HCT116 (cell line): ENCODE measurements at regions of chr1 and their contacts with region 1.

Region 1: GRCh38 chr1:233240829-233241682 is 54.5 kb downstream of the PCNX2 start:
- DNase-seq: no peak
- ATAC-seq: peak; percentile 75
- H3K4me3 ChIP-seq: no peak overlapping the region
- H3K27ac ChIP-seq: no peak overlapping the region
- H3K4me1 ChIP-seq: peaks cover 3 to 12% of the 10 kb centered on the region in 2 experiments; a peak in 1 of 4 replicates
- H3K27me3 ChIP-seq: no peaks in the 10 kb centered on the region
- CTCF ChIP-seq: peak; percentile 62 to 75 (median 65); a peak in 5 of 6 replicates
- POLR2A ChIP-seq: no peak
- RAD21 ChIP-seq: peak; percentile 84

Region 2: GRCh38 chr1:231866392-231867331 is 1374.4 kb before region 1 on chr1:
- CTCF ChIA-PET with region 1: no interaction called
- POLR2A ChIA-PET with region 1: no interaction called
- RAD21 ChIA-PET with region 1: no interaction called
- intact Hi-C with region 1: loop called (anchors 1 kb)
- DNase-seq: peak; percentile 23
- ATAC-seq: peak; percentile 77
- H3K4me3 ChIP-seq: no peak overlapping the region
- H3K27ac ChIP-seq: no peak overlapping the region
- H3K4me1 ChIP-seq: no peaks in the 10 kb centered on the region
- H3K27me3 ChIP-seq: no peaks in the 10 kb centered on the region
- CTCF ChIP-seq: peak; percentile 70 to 93 (median 76); a peak in 5 of 6 replicates
- POLR2A ChIP-seq: no peak
- RAD21 ChIP-seq: peak; percentile 93